Activated T-helper 1 cell treated with anti-CD3 and anti-CD28 coated beads, Interleukin-12 subunit alpha, Interleukin-12 subunit beta, Interleukin-2, Interleukin-4 antibody, amounts not matched to agents 30 ng/mL and 10 ng/mL and 1 ng/mL, durations not matched to agents 14 hours and 24 hours and 36 hours (primary cell): ENCODE measurements at regions of chr7 and their contacts with region 1.

Region 1: GRCh38 chr7:32891800-32892520 is 400 bp upstream of the KBTBD2 start:
- DNase-seq: peak; percentile 98
- H3K4me3 Mint-ChIP-seq: peak overlapping the region; percentile 90
- H3K27ac Mint-ChIP-seq: peak overlapping the region; percentile 95
- H3K4me1 Mint-ChIP-seq: peaks cover 61% of the 10 kb centered on the region
- H3K27me3 Mint-ChIP-seq: peaks cover 2% of the 10 kb centered on the region

Region 2: GRCh38 chr7:32803406-32804141 is 88.4 kb before region 1 on chr7:
- intact Hi-C with region 1: loop called (anchors 2 kb)
- DNase-seq: no peak
- H3K4me3 Mint-ChIP-seq: no peak overlapping the region
- H3K27ac Mint-ChIP-seq: no peak overlapping the region
- H3K4me1 Mint-ChIP-seq: no peaks in the 10 kb centered on the region
- H3K27me3 Mint-ChIP-seq: peaks cover 3% of the 10 kb centered on the region

Region 3: GRCh38 chr7:32865448-32866030 is 26.4 kb before region 1 on chr7:
- intact Hi-C with region 1: no loop called
- DNase-seq: no peak
- H3K4me3 Mint-ChIP-seq: no peak overlapping the region
- H3K27ac Mint-ChIP-seq: no peak overlapping the region
- H3K4me1 Mint-ChIP-seq: peaks cover 17% of the 10 kb centered on the region
- H3K27me3 Mint-ChIP-seq: no peaks in the 10 kb centered on the region

Region 4: DNA sequence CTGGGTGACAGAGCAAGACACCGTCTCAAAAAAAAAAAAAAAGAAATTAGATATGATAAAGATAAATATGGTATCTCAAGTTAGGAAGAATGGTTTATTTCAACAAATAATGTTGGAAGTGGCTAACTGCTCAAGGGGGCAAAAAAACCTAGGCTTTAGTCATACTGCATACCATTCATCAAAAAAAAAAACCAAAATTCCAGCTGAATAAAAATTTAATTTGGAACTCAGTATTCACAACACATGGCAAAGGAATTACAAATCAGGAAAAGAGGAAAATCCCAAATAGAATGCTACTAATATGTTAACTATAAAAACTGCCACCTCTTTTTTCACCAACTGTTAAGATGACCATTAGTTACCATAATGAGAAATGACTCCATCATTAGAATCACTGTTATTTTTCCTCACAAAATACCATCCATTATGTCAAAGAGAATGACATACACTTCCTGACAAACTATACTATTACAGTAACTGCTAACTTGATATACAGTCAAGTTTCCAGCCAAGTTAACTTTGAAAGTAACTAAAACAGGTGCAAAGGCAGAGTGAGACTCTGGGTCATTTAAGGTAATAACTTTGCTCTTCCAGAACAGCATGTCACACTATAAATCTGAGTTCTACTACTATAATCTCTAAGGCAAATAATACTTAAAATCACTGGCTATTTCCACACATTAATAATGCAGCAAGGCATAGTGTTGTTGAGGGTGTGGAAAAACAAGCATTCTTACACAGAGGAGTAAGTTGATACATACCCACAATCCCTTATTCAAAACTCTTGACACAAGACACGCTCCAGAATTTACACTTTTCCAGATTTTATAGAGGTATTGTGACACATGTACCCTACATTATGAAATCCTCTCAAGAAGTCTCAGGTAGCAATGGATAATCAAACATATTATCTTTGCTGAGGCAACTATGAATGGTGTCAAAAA is 10.6 kb before region 1 on chr7:
- intact Hi-C with region 1: loop called (anchors 1 kb)
- DNase-seq: no peak
- H3K4me3 Mint-ChIP-seq: no peak overlapping the region
- H3K27ac Mint-ChIP-seq: peak overlapping the region; percentile 77
- H3K4me1 Mint-ChIP-seq: peaks cover 38% of the 10 kb centered on the region
- H3K27me3 Mint-ChIP-seq: no peaks in the 10 kb centered on the region

Region 5: DNA sequence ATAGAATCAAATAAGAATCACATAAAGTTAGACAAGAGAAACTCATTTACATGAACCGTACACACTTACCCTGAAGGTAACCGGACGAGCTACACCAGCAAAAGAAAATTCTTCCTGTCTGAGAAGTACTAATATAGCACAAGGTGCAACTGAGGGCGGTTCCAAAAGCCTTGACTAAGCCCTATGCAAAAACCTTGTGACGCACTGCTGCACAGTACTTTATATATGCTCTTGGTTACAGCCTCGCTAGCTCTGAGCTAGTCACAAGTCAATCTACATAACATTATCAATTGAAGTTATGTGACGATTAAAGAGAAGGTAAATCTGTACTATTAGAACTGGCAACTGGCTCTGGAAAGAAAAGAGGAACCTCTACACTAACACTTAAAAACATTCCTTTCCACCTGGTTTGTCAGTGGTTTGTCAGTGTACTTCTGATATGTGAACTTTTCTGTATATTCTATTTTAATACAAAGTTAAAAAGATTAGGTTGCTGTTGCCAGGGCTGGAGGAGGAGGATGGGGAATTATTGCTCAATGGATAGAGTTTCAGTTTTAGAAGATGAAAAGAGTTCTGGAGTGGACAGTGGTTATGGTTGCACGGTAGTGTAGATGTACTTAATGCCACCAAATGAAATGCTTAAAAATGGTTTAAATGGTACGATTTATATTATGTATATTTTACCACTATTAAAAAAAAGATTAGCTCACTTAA is 149.0 kb after region 1 on chr7:
- intact Hi-C with region 1: loop called (anchors 1 kb)
- DNase-seq: peak; percentile 67
- H3K4me3 Mint-ChIP-seq: peak overlapping the region; percentile 80
- H3K27ac Mint-ChIP-seq: peak overlapping the region; percentile 73
- H3K4me1 Mint-ChIP-seq: peaks cover 65% of the 10 kb centered on the region
- H3K27me3 Mint-ChIP-seq: no peaks in the 10 kb centered on the region

Region 6: DNA sequence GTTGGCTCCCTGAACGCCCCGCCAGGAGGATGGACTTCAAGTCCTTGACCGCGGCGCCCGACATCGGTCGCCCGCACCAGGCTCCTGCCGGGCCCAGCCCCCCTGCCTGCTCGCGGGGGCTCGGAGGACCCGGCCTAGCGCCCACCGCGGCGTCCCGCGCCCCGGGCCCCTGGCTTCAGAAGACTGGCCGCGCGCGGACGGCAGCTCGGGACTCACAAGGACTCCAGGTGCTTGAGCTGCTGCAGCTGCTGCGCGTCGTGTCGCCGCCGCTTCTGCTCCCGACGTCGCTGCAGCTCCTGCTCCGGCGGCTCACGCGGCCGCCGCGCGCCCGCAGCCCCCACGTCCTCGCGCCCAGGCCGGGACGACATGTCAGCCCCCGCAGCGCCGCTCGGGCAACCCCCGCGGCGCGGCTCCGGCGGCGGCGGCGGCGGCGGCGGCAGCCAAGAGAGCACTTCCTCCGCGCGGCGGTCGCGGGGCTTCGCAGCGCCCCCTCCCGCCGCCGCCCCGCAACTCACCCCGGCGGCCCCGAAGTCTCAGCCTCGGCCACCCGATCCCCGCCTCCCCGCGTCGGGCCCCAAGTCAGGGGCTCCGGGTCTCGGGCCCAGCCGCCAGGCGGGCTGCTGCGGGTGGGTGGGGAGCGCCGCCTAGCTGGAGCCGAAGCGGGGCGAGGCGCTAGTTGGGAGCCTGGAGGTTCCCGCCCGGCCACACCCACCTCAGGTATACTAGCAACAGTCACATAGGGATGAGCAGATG is 217.2 kb after region 1 on chr7 and contains the start of gene RP9:
- intact Hi-C with region 1: loop called (anchors 1 kb)
- DNase-seq: peak; percentile 72
- H3K4me3 Mint-ChIP-seq: peak within 1 kb of the TSS; percentile 91
- H3K27ac Mint-ChIP-seq: peak within 1 kb of the TSS; percentile 42
- H3K4me1 Mint-ChIP-seq: peaks cover 34% of the 10 kb centered on the region
- H3K27me3 Mint-ChIP-seq: peaks cover 21% of the 10 kb centered on the region
- total RNA-seq, gene RP9: 22.6 and 23.6 TPM in 2 replicates